A673 (cell line): ENCODE measurements at regions of chr16 and their contacts with region 1.

Region 1: DNA sequence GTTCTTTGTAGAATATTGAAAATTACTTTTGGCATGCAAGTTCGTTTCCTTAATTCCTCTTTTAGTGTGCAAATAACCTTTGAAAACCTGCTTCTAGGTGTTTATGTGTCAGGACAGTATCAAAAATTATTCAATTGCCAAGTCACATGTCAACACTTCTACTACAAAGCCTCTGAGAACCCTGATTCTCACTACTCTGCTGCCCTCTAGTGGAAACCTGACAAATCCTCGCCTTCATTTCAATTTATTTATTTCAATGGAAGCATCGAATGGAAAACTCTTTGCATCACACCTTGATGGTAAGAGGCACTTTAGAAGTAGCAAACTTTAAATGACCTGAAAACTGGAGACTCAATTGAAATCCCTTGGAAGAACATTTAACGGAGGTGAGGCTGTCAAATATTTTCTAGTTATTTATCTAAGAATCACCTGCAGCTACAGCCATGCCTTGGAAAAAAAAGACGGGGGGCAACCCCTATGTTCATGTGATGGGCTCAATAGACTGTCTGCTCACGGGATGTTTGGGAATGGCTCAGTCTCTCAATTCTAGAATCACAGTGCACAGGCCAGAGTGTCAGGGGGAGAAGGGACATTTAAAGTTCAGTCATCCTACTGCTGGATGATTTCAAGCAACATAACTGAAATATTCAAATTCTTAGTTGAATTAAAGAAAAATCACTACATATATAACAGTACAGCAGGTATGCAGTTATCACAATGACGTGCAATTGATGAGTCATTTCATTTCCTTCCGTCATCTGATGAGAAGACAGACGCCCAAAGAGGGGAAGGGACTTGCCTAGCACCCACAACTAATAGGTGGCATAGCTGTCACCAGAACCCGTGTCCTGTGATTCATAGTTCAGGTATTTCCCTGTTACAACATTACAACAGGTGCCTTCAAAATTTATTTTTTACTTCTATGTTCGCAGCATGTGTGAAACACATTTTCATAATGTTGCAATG is 563.9 kb downstream of the TOX3 start:
- DNase-seq: peak; percentile 88
- H3K4me3 ChIP-seq: no peak overlapping the region
- H3K27ac ChIP-seq: no peak overlapping the region
- H3K4me1 ChIP-seq: no peaks in the 10 kb centered on the region
- H3K27me3 ChIP-seq: no peaks in the 10 kb centered on the region
- CTCF ChIP-seq: peak; percentile 84

Region 2: GRCh38 chr16:50530277-50531236 is 1452.4 kb before region 1 on chr16:
- CTCF ChIA-PET with region 1: no interaction called
- POLR2A ChIA-PET with region 1: no interaction called
- intact Hi-C with region 1: no loop called
- DNase-seq: no peak
- H3K4me3 ChIP-seq: no peak overlapping the region
- H3K27ac ChIP-seq: no peak overlapping the region
- H3K4me1 ChIP-seq: no peaks in the 10 kb centered on the region
- H3K27me3 ChIP-seq: peaks cover 8% of the 10 kb centered on the region
- CTCF ChIP-seq: no peak

Region 3: DNA sequence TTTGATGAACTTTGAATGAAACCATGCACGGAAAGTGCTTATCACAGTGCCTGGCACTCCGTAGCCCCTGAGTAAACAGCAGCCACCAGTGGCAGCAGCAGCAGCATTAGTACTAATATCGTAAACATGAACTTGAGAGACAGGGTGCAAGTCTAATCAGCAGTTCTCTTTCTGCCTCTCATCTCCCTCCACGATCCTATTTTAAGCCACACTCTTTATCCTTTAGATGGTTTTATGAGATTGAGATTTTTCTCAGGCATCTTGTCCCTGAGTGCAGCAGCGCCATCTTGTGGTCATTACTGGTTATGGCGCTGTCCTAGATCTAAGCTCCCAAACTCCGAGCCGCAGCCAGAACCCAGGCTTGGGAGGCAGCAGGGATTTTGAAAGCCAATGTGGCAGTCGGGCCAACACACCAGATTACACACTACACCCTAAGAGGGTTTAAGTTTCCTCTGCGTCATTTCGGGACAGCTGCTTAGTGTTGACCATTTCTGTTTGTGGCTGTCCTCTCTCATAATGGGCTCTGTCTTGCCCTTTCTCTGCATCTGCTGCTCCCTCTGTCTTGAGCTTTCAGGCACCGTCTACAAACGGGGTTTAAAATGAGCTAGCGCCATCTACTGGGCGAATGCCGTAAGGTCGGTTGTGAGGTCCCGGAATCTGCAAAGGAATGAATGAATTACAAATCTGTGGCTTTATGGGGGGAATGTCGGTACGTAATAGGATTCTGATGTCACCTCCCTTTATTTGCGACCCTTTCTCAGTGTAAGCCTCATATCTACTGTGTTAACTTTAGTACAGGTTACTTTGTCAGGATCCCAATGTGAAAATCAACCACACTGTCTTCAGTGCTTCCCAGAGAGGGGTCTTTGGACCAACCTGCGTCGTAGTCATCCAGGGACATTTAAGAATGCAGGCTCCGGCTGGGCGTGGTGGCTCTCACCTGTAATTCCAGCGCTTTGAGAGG is 1176.6 kb before region 1 on chr16:
- CTCF ChIA-PET with region 1: no interaction called
- POLR2A ChIA-PET with region 1: no interaction called
- intact Hi-C with region 1: loop called (anchors 10 kb)
- DNase-seq: peak; percentile 91
- H3K4me3 ChIP-seq: peak overlapping the region; percentile 43
- H3K27ac ChIP-seq: no peak overlapping the region
- H3K4me1 ChIP-seq: no peaks in the 10 kb centered on the region
- H3K27me3 ChIP-seq: no peaks in the 10 kb centered on the region
- CTCF ChIP-seq: peak; percentile 95

Region 4: GRCh38 chr16:51146256-51146924 is 836.6 kb before region 1 on chr16:
- CTCF ChIA-PET with region 1: interaction called, 6 read pairs
- POLR2A ChIA-PET with region 1: no interaction called
- intact Hi-C with region 1: loop called (anchors 5 kb)
- DNase-seq: peak; percentile 76
- H3K4me3 ChIP-seq: peak overlapping the region; percentile 21
- H3K27ac ChIP-seq: peak overlapping the region; percentile 50
- H3K4me1 ChIP-seq: peaks cover 40% of the 10 kb centered on the region
- H3K27me3 ChIP-seq: peaks cover 19% of the 10 kb centered on the region
- CTCF ChIP-seq: peak; percentile 61

Region 5: DNA sequence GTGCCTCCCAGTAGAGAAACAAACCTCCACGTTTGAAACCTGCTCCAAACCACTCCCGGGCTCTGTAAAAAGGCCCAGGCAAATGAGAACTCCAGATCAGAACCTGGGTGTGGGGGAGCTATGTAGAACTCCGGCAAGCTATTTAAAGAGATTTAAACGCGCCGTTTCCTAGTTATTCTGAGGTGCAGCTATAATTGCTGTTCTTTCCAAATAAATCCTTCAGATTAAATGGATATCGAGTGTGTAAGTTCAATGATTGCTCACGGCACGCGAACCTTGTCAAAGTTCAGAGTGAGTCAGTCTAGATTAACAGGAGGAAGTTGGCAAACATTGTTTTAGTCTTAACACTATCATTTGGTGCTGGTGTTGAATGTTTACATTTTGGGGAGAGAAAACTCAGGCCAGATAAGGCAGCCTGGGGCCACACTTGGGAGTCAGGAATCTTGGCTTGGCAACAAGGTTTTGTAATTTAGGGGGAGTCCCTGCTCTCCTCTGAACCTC is 739.0 kb before region 1 on chr16:
- CTCF ChIA-PET with region 1: no interaction called
- POLR2A ChIA-PET with region 1: no interaction called
- intact Hi-C with region 1: no loop called
- DNase-seq: no peak
- H3K4me3 ChIP-seq: no peak overlapping the region
- H3K27ac ChIP-seq: no peak overlapping the region
- H3K4me1 ChIP-seq: no peaks in the 10 kb centered on the region
- H3K27me3 ChIP-seq: peaks cover 4% of the 10 kb centered on the region
- CTCF ChIP-seq: no peak

Region 6: GRCh38 chr16:51762081-51762996 is 220.7 kb before region 1 on chr16:
- CTCF ChIA-PET with region 1: no interaction called
- POLR2A ChIA-PET with region 1: no interaction called
- intact Hi-C with region 1: loop called (anchors 5 kb)
- DNase-seq: peak; percentile 92
- H3K4me3 ChIP-seq: peak overlapping the region; percentile 13
- H3K27ac ChIP-seq: peak overlapping the region; percentile 34
- H3K4me1 ChIP-seq: peaks cover 55% of the 10 kb centered on the region
- H3K27me3 ChIP-seq: no peaks in the 10 kb centered on the region
- CTCF ChIP-seq: peak; percentile 98

Region 7: DNA sequence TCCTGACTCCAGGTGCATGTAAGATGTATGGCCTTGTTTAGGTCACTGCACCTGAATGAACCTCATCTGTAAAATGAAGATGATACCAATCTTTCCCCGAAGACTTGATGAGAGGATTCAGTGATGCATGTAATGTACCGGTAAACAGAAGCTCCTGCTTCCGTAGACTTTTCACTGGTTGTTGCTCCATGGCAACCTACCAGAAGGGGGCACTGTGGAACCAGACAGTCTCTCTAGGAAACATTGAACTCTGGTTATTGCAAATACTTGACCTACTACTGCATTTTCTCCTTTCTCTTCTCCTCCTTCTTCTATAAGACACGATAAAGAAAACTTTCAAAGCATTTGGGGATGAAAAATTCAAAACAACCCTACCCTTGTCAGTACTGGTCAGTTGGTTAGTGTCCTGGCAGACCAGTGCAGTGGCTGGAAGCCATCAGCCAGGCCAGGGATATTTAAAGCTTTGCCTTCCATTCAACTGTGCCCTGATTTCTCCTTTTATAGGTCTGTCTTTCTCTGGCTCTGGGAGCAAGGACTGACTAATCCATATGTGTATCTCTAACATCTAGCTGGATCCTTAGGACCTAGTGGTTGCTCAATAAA is 164.6 kb before region 1 on chr16:
- CTCF ChIA-PET with region 1: interaction called, 21 read pairs
- POLR2A ChIA-PET with region 1: no interaction called
- intact Hi-C with region 1: loop called (anchors 1 kb)
- DNase-seq: peak; percentile 78
- H3K4me3 ChIP-seq: no peak overlapping the region
- H3K27ac ChIP-seq: no peak overlapping the region
- H3K4me1 ChIP-seq: peaks cover 9% of the 10 kb centered on the region
- H3K27me3 ChIP-seq: no peaks in the 10 kb centered on the region
- CTCF ChIP-seq: peak; percentile 88